IMR-90 (cell line): ENCODE measurements at regions of chr6 and their contacts with region 1.

Region 1: GRCh38 chr6:3751730-3752542 is 423 bp upstream of the PXDC1 start:
- DNase-seq: peak; percentile 93
- ATAC-seq: peak; percentile 79
- H3K4me3 ChIP-seq: peak overlapping the region; percentile 99
- H3K27ac ChIP-seq: peak overlapping the region; percentile 86
- H3K4me1 ChIP-seq: peaks cover 21% of the 10 kb centered on the region
- H3K27me3 ChIP-seq: no peaks in the 10 kb centered on the region
- CTCF ChIP-seq: peak; percentile 42
- POLR2A ChIP-seq: peak; percentile 4; the same call in 1 of the 2 replicates
- RAD21 ChIP-seq: peak; percentile 40

Region 2: DNA sequence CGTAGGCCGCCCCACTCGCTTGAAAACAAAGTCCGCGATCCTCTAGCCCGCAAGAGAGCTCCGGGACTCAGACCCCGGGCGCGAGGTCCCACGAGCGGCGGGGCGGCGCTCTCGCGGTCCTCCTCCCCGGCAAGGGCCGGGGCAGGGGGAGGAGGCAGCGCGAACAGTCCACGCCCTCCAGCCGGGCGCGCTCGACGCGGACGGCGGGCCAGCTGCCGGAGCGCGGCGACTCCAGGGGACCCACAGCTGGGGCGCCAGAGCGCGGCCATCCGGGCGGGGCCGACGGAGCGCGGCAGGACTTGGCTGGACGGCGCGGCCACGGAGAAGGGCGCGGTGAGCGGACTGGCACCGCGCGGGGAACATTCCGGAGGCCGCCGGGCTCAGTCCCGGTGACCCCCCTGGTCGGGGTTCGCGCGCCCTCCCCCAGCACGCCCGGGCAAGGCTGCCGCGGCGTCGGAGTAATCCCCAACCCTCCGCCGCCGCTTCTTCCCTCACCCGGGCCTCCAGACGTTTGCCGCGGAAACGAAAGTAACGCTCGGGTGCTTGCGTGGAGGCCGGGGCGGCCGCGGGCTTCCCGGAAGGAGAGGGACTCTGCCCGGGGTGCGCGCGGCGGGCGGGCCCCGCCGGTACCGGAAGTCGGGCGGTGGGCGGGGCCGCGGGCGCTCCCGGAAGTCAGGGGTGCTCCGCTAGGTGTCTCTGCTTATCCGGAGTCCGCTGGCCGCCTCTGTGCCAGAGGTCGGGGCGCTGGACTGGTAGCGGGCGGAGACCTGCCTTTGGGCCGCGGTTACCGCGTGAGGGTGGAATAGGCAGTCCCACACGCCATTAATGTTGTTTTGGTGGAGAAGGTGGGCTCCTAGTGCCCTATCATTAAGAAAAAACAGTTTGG is 683.4 kb before region 1 on chr6 and contains the start of gene RIPK1:
- CTCF ChIA-PET with region 1: no interaction called
- POLR2A ChIA-PET with region 1: interaction called, 16 read pairs
- dilution Hi-C with region 1: no loop called
- in situ Hi-C with region 1: no loop called
- intact Hi-C with region 1: no loop called
- DNase-seq: peak; percentile 84
- ATAC-seq: peak; percentile 80
- H3K4me3 ChIP-seq: peak within 1 kb of the TSS; percentile 83
- H3K27ac ChIP-seq: peak within 1 kb of the TSS; percentile 95
- H3K4me1 ChIP-seq: peaks cover 7% of the 10 kb centered on the region; the same call in 1 of the 2 replicates
- H3K27me3 ChIP-seq: no peaks in the 10 kb centered on the region
- CTCF ChIP-seq: peak; percentile 48
- POLR2A ChIP-seq: peak; percentile 92
- RAD21 ChIP-seq: no peak
- total RNA-seq, gene RIPK1: 25.6 and 28.6 TPM in 2 replicates

Region 3: DNA sequence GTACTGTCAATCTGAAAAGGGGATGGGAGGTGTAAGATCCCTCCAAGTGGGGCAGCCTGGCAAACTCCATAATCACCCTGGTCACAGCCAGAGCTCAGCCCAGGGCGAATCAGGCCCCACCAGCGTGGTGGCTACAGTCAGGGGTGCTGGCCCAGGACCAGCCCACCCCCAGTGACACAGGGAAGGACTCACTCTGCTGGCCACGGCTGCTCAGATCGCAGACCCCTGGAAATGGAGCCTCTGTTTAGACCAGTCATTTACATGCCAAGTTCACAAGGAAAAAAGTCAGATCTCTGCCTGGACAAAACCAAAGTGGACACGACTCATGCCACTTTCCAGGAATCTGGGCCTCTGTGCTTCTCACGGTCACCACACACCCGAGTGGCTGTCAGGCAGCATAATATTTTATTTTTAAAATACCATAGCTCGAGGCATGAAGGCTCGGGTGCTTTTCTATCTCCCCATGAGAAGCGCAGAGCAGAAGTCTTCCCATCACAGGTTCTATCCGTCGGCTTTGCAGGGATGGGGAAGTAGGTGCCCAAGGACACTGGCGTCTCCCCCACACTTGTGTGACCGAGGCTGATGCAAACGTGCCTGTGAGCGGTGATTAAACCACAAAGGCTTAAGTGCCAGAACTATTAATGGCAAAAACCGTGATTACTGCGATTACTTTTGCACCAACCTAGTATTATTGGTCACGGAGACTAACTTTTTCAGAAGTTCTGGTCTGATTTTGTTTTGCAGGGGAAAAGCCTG is 13.4 kb before region 1 on chr6:
- CTCF ChIA-PET with region 1: no interaction called
- POLR2A ChIA-PET with region 1: no interaction called
- dilution Hi-C with region 1: no loop called
- in situ Hi-C with region 1: no loop called
- intact Hi-C with region 1: no loop called
- DNase-seq: no peak
- ATAC-seq: no peak
- H3K4me3 ChIP-seq: no peak overlapping the region
- H3K27ac ChIP-seq: peak overlapping the region; percentile 14; the same call in 1 of the 2 replicates
- H3K4me1 ChIP-seq: peaks cover 32% of the 10 kb centered on the region
- H3K27me3 ChIP-seq: no peaks in the 10 kb centered on the region
- CTCF ChIP-seq: no peak
- POLR2A ChIP-seq: no peak
- RAD21 ChIP-seq: no peak

Region 4: GRCh38 chr6:3825851-3826581 is 74.1 kb after region 1 on chr6:
- CTCF ChIA-PET with region 1: no interaction called
- POLR2A ChIA-PET with region 1: no interaction called
- dilution Hi-C with region 1: no loop called
- in situ Hi-C with region 1: no loop called
- intact Hi-C with region 1: loop called (anchors 5 kb)
- DNase-seq: peak; percentile 97
- ATAC-seq: peak; percentile 98
- H3K4me3 ChIP-seq: no peak overlapping the region; the same call in 1 of the 2 replicates
- H3K27ac ChIP-seq: peak overlapping the region; percentile 97
- H3K4me1 ChIP-seq: peaks cover 11% of the 10 kb centered on the region
- H3K27me3 ChIP-seq: no peaks in the 10 kb centered on the region
- CTCF ChIP-seq: no peak
- POLR2A ChIP-seq: no peak
- RAD21 ChIP-seq: peak; percentile 27; the same call in 1 of the 2 replicates

Region 5: GRCh38 chr6:3887150-3887700 is 135.3 kb after region 1 on chr6:
- CTCF ChIA-PET with region 1: interaction called, 6 read pairs
- POLR2A ChIA-PET with region 1: no interaction called
- dilution Hi-C with region 1: no loop called
- in situ Hi-C with region 1: loop called (anchors 10 kb)
- intact Hi-C with region 1: loop called (anchors 1 kb)
- DNase-seq: peak; percentile 54
- ATAC-seq: 0 out of 2 replicates have a peak, but pooled peaks have one; percentile 35
- H3K4me3 ChIP-seq: no peak overlapping the region
- H3K27ac ChIP-seq: no peak overlapping the region
- H3K4me1 ChIP-seq: peaks cover 8% of the 10 kb centered on the region
- H3K27me3 ChIP-seq: 0 out of 2 replicates have a peak, but pooled peaks cover 2% of the 10 kb centered on the region
- CTCF ChIP-seq: peak; percentile 64
- POLR2A ChIP-seq: no peak
- RAD21 ChIP-seq: peak; percentile 74

Region 6: DNA sequence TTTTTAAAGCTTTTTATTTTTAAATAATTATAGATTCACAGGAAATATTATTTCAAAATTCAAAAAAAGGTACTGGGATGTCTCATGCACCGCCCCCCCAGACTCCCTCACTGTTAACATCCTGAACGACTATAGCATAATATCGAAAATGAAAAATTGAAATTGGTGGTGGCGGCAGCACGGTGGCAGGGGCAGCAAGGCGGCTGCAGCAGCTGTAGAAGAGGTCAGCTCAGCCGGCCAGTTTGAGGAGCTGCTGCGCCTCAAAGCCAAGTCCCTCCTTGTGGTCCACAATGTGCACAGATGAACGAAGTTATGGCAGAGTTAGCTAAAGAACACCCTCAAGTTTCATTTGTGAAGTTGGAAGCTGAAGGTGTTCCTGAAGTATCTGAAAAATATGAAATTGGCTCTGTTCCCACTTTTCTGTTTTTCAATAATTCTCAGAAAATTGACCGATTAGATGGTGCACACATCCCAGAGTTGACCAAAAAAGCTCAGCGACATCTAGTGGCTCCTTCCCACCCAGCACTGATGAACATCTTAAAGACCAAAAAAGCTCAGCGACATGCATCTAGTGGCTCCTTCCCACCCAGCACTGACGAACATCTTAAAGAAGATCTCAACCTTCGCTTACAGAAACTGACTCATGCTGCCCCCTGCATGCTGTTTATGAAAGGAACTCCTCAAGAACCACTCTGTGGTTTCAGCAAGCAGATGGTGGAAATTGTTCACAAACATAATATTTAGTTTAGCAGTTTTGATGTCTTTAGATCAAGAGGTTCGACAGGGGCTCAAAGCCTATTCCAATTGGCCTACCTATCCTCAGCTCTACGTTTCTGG is 226.2 kb after region 1 on chr6:
- CTCF ChIA-PET with region 1: interaction called, 7 read pairs
- POLR2A ChIA-PET with region 1: no interaction called
- dilution Hi-C with region 1: no loop called
- in situ Hi-C with region 1: loop called (anchors 5 kb)
- intact Hi-C with region 1: loop called (anchors 1 kb)
- DNase-seq: peak; percentile 96
- ATAC-seq: peak; percentile 97
- H3K4me3 ChIP-seq: no peak overlapping the region
- H3K27ac ChIP-seq: no peak overlapping the region
- H3K4me1 ChIP-seq: peaks cover 4% of the 10 kb centered on the region
- H3K27me3 ChIP-seq: no peaks in the 10 kb centered on the region
- CTCF ChIP-seq: peak; percentile 85
- POLR2A ChIP-seq: no peak
- RAD21 ChIP-seq: peak; percentile 77

Region 7: DNA sequence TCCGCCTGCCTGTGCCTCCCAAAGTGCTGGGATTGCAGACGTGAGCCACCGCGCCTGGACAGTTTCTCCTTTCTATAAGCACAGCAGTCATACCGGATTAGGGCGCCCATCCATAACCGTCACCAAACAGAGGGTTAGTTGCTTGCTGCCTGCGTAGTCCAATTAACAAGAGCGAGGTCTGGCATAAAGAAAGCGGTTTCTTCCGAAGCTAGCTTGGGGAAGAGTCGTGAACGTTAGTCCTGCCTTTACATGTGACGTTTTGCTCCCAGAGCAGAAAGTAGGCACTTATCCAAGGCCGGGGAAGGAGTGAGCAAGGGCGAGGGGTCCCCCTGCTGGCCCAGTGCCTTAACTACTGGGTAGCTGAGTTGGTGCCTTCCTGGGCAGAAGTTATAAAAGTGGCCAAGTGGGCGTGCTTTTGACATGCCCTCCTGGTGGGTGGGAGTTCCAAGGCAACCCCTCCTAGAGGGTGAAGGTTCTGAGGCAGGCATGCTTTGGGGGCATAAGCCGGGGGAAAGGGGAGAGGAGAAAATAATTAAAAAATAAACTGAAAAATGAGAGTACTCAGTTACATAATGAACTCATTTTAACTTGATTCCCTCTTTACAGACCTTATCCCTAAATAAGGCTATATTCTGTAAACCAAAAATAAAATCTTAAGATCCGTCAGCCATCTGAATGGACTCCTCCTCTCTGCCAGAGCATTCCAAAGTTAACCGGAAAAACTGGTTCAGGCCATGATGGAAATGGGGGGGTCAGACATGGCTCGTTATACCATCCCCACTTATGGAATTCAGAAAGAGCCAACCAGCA is 239.0 kb after region 1 on chr6:
- CTCF ChIA-PET with region 1: interaction called, 3 read pairs
- POLR2A ChIA-PET with region 1: no interaction called
- dilution Hi-C with region 1: no loop called
- in situ Hi-C with region 1: no loop called
- intact Hi-C with region 1: loop called (anchors 1 kb)
- DNase-seq: peak; percentile 88
- ATAC-seq: peak; percentile 96
- H3K4me3 ChIP-seq: peak overlapping the region; percentile 5; the same call in 1 of the 2 replicates
- H3K27ac ChIP-seq: peak overlapping the region; percentile 11; the same call in 1 of the 2 replicates
- H3K4me1 ChIP-seq: peaks cover 6% of the 10 kb centered on the region
- H3K27me3 ChIP-seq: no peaks in the 10 kb centered on the region
- CTCF ChIP-seq: peak; percentile 97
- POLR2A ChIP-seq: no peak
- RAD21 ChIP-seq: peak; percentile 94